ENCODE measurements at regions of chr20 and their contacts with region 1.

Region 1: GRCh38 chr20:33666293-33667244 is at the start of gene ACTL10:
- DNase-seq: peak; percentile 97
- total RNA-seq, gene ACTL10: 0.46 TPM

Region 2: GRCh38 chr20:33460711-33461110 is 205.9 kb before region 1 on chr20:
- intact Hi-C with region 1: loop called (anchors 1 kb)
- DNase-seq: no peak

Region 3: DNA sequence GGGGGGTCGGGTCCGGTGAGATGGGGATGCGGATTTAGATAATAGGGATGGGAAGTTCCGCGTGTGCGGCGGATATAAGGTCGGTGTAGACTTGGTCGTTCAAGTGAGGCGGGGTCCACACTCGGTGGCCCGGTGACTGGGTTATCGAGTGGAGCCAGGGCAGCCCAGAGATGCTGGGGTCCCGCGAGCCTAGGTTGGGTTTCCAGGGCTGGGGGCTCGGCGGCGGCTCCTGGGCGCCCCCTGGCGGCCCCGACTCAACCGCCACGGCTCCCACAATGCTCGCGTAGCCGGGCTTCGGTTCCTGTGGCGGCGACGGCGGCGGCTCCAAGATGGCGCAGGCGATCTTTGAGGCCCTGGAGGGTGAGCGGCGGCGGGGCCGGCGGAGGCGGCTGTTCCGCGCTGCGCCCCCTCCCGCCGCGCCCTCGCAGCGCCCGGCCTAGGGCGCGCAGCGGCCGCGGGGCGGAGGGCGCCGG is 65.2 kb after region 1 on chr20 and contains the start of gene ZNF341:
- intact Hi-C with region 1: loop called (anchors 2 kb)
- DNase-seq: peak; percentile 95
- total RNA-seq, gene ZNF341: 1.3 TPM

Measured in cardiac septum (tissue), 1 donor.